Posterior cingulate gyrus (tissue), 11 donors: ENCODE measurements at regions of chr14 and their contacts with region 1.

Region 1: GRCh38 chr14:23327947-23328744 is 6.9 kb downstream of the PABPN1 start:
- DNase-seq: peak in 7 of 10 donors; percentile 65 to 89 (median 80)

Region 2: DNA sequence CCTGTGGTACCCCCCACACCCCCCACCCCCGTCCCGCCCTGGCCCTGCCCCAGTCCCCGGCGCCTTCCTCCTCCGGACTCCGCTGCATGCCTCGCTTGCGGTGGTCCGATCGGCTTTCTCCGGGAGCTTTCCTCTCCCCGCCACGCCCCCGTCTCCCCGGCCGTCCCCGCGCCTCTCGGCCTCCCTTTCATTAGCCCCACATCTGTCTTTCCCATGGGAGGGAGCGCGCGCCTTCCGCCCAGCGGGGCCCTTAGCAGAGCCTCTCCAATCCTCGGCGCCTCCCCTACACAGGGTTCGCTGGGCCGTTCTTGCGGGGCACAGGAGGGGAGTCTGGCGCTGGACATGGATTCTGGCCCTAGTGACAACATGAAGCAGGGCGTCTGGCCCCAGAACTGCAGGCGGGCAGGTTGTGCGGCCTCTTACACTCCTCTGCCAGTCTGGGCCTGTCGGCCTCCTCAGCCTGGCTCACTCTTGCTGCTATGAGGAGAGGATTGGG is 38.3 kb after region 1 on chr14:
- intact Hi-C with region 1: loop called (anchors 5 kb)
- DNase-seq: peak; percentile 53 to 95 (median 70)

Region 3: DNA sequence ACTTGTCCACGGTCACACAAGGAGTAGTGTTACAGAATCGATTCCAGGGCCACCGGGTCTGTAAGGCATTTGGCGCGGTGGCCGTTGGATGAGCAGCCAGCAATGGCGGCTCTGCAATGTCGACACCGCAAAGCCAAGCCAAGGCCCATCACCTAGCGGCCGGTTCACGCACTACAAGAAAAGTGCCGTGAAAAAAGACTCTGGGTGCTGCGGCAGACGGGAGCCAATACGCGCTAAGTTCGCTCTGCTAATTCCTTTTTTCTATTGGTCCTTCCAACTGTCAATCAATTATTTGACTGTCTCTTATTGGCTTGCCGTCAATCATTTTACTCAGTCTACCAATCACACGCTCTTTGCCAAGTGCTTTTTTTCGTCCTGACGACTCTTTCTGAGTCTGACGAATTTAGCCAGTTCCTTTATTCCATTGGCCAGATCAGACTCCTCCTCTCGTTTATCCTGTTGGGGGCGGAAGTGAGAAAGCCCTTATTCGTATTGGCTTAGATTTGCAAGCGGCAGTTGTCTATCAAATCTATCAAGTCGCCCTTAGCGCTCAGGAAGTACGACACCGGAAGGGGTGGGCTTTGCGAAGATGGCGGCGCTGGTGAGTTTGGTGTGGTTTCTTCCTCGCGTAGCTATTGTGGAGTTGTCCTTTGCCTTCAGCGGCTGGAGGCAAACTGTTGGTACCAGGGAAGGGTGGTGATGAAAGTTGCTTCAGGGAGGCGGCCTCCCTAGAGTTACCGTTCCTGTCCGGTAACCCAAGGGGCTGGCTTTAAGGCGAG is 141.2 kb after region 1 on chr14 and contains the start of gene NGDN:
- intact Hi-C with region 1: loop called (anchors 2 kb)
- DNase-seq: peak; percentile 94 to 99 (median 98)

Region 4: DNA sequence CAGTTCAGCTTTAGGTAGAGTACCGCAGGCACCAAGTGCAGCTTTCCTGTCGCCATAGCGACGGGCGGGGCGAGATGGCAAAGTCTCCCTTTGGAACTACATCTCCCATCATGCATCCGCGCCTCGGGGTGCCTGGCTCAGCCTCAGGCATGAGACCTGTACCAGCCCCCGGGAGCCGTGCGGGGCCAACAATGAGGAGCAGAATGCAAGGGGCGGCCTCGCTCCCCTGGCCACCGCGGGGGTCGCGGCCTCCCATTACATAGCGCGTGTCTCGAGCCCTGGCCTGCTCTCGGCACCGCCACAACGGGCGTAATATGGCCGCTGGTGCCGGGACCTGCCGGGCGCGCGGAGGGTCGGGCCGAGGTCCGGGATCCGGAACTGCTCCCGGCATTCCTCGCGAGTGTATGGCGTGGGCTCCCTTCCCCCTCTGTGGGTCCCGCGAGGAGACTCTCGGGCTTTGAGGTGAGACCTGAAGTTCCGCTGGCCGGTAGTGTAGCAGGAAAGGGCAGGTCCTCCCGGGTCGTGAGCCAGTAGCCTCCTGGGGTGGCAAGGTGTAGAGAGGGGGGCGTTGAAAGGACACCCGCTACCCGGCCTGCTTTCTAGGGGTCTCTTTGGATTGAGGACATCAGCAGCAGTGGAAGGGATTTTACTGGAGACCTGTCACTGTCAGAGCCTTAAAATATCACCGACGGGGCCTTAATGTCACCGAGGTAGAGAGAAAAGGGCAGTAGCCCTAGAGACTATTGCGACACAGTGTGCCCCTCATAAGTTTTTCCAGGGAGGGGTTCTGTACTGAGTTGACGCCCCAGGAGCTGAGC is 227.9 kb after region 1 on chr14 and contains the start of gene THTPA:
- intact Hi-C with region 1: loop called (anchors 5 kb)
- DNase-seq: peak; percentile 89 to 99 (median 92)